Activated T-helper 1 cell treated with anti-CD3 and anti-CD28 coated beads, Interleukin-12 subunit alpha, Interleukin-12 subunit beta, Interleukin-2, Interleukin-4 antibody, amounts not matched to agents 30 ng/mL and 10 ng/mL and 1 ng/mL, durations not matched to agents 14 hours and 24 hours and 36 hours (primary cell): ENCODE measurements at regions of chr7 and their contacts with region 1.

Region 1: DNA sequence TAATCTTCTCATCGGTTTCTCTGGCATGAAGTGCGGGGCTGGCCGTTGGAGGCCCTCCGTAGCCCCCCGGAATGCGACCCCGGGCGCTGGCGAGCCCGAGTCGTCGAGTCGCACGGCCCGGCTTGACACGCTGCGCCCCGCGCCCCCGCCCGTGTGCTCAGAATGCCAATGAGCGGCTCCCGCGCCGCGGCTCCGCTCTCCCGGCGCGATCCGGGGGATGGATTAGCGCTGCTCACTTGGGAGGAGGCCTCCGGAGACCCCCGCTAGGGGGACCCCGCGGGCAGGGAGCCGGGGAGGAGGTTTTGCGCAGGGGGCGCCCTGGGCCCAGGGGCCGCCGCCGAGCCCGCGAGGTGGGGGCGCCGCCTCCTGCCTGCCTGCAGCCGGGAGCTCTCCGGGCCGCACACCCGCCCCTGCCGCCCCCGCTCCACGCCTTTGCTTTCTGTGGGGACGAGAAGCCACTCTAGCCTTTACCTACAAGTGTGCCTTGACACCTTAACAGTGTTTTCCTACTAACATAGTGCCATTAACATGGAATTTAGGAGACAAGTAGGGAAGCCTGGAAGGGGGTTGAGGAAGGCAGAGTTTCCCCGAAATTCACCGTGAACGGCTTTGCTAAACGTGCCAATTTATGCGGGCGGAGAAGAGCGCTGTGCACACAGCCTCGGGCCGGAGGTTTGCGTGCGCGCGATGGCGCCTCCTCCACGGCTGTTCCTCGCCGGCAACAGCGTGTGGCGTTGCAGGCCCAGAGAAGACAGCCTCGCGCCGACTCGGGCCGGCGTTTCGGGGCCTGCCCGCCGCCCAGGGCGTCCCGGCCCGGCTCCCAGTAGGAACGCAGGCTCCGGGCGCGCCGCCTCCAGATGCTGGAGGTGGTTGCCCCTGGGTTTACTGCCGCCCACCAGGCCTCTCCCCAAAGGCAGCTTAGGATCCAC is 7.1 kb downstream of the SHH start:
- DNase-seq: peak; percentile 33
- H3K4me3 Mint-ChIP-seq: peak overlapping the region; percentile 59
- H3K27ac Mint-ChIP-seq: no peak overlapping the region
- H3K4me1 Mint-ChIP-seq: peaks cover 16% of the 10 kb centered on the region
- H3K27me3 Mint-ChIP-seq: peaks cover 48% of the 10 kb centered on the region

Region 2: DNA sequence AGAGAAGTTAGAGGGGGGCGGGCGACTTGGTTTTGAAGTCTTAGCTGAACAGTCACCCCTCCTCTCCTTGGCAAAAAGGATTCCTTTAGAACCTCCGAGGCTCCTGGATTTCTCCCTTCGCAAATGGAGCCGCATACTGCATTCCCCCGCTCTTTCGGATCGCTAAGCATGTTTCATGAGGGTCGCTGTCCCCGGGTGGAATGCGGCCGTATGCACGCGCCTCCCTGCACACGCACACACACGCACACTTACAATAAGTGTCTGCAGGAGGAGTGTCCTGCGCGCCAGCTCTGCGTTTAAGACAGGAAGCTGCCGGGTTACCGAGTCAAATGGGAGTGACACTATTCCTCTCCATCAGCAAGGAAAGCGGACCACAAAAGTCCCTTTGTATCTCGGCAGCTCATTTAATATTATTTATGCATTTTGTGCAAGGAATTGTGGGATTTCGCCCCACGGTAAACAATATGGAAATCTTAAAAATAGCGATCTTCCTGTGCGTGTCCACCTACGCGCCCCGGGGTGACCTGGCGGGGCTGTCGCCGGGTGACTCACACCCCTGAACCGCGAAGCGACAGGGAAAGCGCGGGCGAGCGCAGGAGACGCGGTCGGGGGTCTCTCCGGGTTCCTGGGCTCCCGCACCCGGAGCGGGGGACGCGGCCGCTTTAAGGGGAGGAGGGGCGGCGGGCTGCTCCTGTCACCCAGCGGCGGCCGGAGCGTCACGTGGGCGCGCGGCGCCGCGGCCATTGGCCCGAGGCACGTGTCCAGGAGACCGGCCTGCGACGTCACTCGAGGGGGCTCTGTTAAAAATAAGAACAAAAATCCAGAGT is 348.2 kb before region 1 on chr7:
- intact Hi-C with region 1: loop called (anchors 2 kb)
- DNase-seq: no peak
- H3K4me3 Mint-ChIP-seq: peak overlapping the region; percentile 5
- H3K27ac Mint-ChIP-seq: peak overlapping the region; percentile 70
- H3K4me1 Mint-ChIP-seq: peaks cover 4% of the 10 kb centered on the region
- H3K27me3 Mint-ChIP-seq: peaks cover 68% of the 10 kb centered on the region

Region 3: DNA sequence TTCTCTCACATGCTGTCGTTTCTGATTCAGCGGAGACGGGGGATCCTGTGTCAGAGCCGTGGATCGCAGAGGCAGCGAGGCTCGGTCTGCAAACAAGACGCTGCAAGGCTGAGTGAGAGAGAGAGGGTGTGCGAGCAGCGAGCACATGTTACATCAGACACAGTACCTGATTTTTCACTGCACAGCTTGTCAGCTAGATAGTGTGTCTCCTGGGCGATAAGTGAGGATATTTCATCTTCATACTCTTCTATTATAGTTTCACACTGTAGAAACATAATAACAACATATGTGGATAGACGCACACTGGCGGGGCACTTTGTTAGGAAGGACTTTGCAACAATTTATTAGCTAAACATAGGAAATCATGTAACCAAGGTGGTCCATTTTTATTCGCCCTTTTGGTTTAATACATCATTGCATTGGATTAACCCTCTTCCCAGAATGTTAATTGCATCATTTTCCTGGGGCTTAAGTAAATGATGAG is 298.3 kb before region 1 on chr7:
- intact Hi-C with region 1: loop called (anchors 1 kb)
- DNase-seq: no peak
- H3K4me3 Mint-ChIP-seq: no peak overlapping the region
- H3K27ac Mint-ChIP-seq: peak overlapping the region; percentile 14
- H3K4me1 Mint-ChIP-seq: peaks cover 18% of the 10 kb centered on the region
- H3K27me3 Mint-ChIP-seq: peaks cover 88% of the 10 kb centered on the region

Region 4: GRCh38 chr7:155815332-155816191 is 10.4 kb after region 1 on chr7:
- intact Hi-C with region 1: loop called (anchors 1 kb)
- DNase-seq: peak; percentile 66
- H3K4me3 Mint-ChIP-seq: no peak overlapping the region
- H3K27ac Mint-ChIP-seq: peak overlapping the region; percentile 67
- H3K4me1 Mint-ChIP-seq: peaks cover 21% of the 10 kb centered on the region
- H3K27me3 Mint-ChIP-seq: peaks cover 47% of the 10 kb centered on the region

Region 5: GRCh38 chr7:157004050-157004838 is 1199.1 kb after region 1 on chr7:
- intact Hi-C with region 1: loop called (anchors 2 kb)
- DNase-seq: no peak
- H3K4me3 Mint-ChIP-seq: no peak overlapping the region
- H3K27ac Mint-ChIP-seq: peak overlapping the region; percentile 40
- H3K4me1 Mint-ChIP-seq: peaks cover 14% of the 10 kb centered on the region
- H3K27me3 Mint-ChIP-seq: peaks cover 72% of the 10 kb centered on the region